OCI-LY7 (cell line): ENCODE measurements at regions of chr17 and their contacts with region 1.

Region 1: GRCh38 chr17:4903051-4903818 is at the start of gene CHRNE:
- DNase-seq: peak; percentile 85
- H3K4me3 ChIP-seq: no peak within 1 kb of the TSS
- H3K27ac ChIP-seq: no peak within 1 kb of the TSS
- H3K4me1 ChIP-seq: peaks cover 9% of the 10 kb centered on the region
- CTCF ChIP-seq: peak; percentile 83
- total RNA-seq, gene CHRNE: 0.32 and 0.59 TPM in 2 replicates

Region 2: DNA sequence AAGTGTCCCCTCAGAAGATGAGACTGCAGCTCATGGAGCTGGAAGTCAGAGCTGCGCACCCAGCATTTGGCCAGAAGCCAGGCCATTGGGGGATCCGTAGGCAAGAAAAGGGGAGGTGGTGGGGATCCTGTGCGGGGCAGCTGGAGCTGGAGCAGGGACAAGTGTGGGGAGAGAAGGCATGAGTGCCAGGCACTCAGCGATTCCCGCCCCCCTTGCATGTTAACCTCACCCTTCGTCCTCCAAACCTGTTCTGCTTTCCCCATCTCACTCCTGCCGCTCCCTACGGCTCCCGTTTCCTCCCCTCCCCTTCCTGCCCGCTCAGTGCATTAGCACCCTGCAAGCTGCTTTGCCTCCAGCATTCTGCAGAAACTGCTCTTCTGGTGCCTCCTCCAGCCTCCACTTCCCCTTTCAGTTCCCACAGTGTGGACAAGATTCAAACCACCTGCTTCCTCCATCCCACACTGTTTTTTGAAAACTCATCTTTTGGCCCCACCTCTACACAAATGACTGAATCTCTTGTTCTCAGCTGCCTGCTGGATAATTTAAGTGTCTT is 267.3 kb before region 1 on chr17:
- CTCF ChIA-PET with region 1: no interaction called
- POLR2A ChIA-PET with region 1: no interaction called
- intact Hi-C with region 1: loop called (anchors 10 kb)
- DNase-seq: peak; percentile 79
- H3K4me3 ChIP-seq: peak overlapping the region; percentile 66
- H3K27ac ChIP-seq: peak overlapping the region; percentile 65
- H3K4me1 ChIP-seq: peaks cover 31% of the 10 kb centered on the region
- CTCF ChIP-seq: no peak

Region 3: DNA sequence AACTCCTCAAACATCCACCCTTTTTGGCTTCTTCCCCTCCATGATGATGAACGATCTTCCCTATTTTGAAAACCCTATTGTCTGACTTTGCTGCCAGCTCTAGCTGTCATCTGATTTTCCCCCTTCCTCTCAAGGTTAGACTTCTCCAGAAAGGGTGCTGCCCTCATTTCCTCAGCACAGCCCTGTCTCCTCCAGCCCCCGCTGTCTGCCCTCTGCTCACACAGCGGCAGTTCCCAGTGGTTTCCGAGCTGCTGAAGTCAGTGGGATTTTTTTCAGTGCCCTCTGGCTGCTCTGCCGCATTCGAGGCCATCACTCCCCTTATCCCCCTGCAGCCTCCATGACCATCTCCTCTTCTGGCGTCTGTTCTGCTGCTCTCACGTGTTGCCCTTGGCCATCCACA is 30.4 kb before region 1 on chr17:
- CTCF ChIA-PET with region 1: no interaction called
- POLR2A ChIA-PET with region 1: no interaction called
- intact Hi-C with region 1: no loop called
- DNase-seq: no peak
- H3K4me3 ChIP-seq: no peak overlapping the region
- H3K27ac ChIP-seq: no peak overlapping the region
- H3K4me1 ChIP-seq: no peaks in the 10 kb centered on the region
- CTCF ChIP-seq: no peak